Sciatic nerve (tissue), 2 donors: ENCODE measurements at regions of chr5 and their contacts with region 1.

Region 1: DNA sequence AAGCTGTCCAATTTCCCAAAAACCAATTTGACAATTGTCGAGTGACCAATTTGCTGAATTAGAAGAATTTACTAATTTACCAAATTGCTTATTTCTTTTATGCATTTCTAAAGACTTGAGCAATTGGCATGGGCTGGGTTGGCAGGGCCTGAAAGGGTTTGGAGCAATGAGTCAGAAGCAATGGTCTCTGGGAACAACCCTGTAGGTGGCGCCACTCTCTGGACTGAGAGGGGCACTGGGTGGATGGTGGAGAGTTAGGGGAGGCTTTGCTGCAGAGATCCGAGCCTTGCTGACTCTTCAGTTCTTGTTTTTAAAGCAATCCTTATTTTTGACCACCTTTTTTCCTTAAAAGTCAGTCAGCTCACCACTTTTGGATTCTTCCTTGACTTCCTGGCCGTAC is 71.5 kb upstream of the RPS23 start:
- DNase-seq: no peak
- ATAC-seq: no peak

Region 2: GRCh38 chr5:83564069-83564749 is 1214.6 kb after region 1 on chr5:
- intact Hi-C with region 1: loop called (anchors 10 kb)
- DNase-seq: no peak
- ATAC-seq: peak; percentile 61